WTC11 (cell line): ENCODE measurements at regions of chr12 and their contacts with region 1.

Region 1: DNA sequence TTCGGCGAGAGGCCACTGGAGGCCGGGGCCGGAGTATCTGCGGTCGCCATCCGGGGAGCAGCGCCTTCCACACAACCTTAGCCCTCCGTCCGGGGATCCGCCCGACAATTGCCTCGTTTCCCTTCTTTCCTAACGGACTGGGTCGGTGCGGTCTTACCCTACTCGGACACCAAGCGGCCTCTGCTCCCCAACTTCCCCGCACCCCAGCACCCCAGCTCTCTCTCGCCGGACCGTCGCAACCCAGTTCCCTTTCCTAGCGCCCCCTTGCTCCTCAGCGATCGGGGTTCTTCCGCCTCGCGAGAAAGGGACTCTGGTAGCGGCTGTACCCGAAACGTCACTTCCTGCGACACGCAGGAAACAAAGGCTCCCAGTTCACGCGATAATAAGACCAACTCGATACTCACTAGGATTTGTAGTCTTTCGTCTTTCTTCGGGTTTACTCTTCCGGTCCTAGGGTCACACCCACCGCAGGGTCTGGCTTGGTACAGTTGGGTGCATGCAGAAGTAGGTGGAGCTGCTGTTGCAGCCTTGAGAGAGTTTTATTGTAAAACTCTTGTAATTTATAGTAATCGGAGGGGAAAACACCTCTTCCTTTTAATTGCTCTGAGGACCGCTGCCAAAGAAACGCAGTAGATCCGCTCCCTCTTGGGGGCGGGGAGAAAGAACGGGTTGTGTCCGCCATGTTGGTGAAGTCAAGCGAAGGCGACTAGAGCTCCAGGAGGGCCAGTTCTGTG is at the start of gene ZFC3H1:
- DNase-seq: peak; percentile 91
- ATAC-seq: peak; percentile 94
- H3K4me3 Mint-ChIP-seq: peak within 1 kb of the TSS; percentile 91
- H3K27ac Mint-ChIP-seq: peak within 1 kb of the TSS; percentile 100
- H3K4me1 Mint-ChIP-seq: peaks cover 16% of the 10 kb centered on the region
- H3K27me3 Mint-ChIP-seq: no peaks in the 10 kb centered on the region
- CTCF ChIP-seq: no peak
- total RNA-seq, gene ZFC3H1: 28.3 to 33.9 TPM (median 30.9 TPM) in 3 replicates

Region 2: DNA sequence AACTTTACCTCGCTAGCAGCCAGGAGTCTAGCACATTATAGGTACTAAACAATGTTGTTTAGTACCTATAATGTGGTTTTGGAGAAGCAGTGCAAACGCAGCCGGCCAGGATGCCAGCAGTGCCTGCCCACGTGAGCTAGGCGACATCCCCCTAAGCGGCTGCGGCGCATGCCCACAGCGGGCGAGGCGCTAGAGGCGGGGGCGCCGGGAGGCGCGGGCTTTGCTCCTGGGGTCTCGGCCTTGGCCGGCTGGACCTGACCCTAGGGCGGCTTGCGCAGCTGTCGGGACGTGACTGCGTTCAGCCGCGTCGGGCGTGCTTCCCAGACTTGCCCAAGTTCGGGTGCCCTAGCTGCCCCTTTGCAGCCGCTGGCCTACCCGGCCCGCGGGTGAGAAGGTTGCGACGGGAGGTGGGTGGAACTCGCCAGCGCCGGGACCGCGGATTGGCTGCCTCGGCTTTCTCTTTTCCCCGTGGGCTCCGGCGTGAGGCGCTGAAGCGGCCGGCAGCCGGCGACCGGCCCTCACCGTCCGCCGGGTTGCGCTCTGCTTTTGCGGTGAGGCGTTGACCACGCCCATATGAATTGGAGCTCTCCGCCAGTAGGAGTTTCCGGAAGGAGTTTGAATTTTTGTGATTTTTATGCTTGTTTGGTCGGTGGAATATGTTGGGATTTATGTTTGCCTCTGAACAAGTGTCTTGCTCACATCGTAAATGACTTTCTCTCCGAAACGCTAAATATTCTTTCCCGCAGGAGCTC is 22.4 kb after region 1 on chr12 and contains the start of gene TMEM19:
- CTCF ChIA-PET with region 1: interaction called, 4 read pairs
- POLR2A ChIA-PET with region 1: interaction called, 45 read pairs
- DNase-seq: peak; percentile 86
- ATAC-seq: peak; percentile 95
- H3K4me3 Mint-ChIP-seq: peak within 1 kb of the TSS; percentile 95
- H3K27ac Mint-ChIP-seq: peak within 1 kb of the TSS; percentile 99
- H3K4me1 Mint-ChIP-seq: peaks cover 14% of the 10 kb centered on the region
- H3K27me3 Mint-ChIP-seq: no peaks in the 10 kb centered on the region
- CTCF ChIP-seq: no peak
- total RNA-seq, gene TMEM19: 10.7 to 15.6 TPM (median 11.7 TPM) in 3 replicates

Region 3: GRCh38 chr12:71754461-71755145 is 90.9 kb after region 1 on chr12 and contains the start of gene RAB21:
- CTCF ChIA-PET with region 1: interaction called, 5 read pairs
- POLR2A ChIA-PET with region 1: interaction called, 16 read pairs
- DNase-seq: peak; percentile 99
- ATAC-seq: peak; percentile 99
- H3K4me3 Mint-ChIP-seq: peak within 1 kb of the TSS; percentile 85
- H3K27ac Mint-ChIP-seq: peak within 1 kb of the TSS; percentile 91
- H3K4me1 Mint-ChIP-seq: peaks cover 35% of the 10 kb centered on the region
- H3K27me3 Mint-ChIP-seq: no peaks in the 10 kb centered on the region; the same call in 1 of the 2 replicates
- CTCF ChIP-seq: no peak
- total RNA-seq, gene RAB21: 32.6 to 35.8 TPM (median 33.6 TPM) in 3 replicates

Region 4: DNA sequence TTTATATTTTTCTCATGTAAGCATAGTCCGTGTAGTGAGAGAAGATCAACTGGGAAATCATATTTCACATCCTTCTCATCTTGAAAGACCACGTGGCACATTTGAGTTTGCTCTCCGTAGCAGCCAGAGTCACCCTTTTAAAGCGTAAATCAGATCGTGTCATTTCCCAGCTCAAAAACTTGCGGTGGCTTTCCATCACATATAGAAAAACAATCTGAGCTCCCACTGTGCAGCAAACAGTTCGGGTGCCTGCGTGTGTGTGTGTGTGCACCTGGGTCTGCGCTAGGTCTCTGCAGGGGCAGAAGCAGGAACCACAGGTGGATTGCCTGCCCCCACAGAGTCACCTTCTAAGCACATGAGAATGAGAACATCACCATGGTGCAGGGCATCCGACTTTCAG is 946.6 kb after region 1 on chr12:
- CTCF ChIA-PET with region 1: no interaction called
- POLR2A ChIA-PET with region 1: no interaction called
- DNase-seq: peak; percentile 11
- ATAC-seq: no peak
- H3K4me3 Mint-ChIP-seq: peak overlapping the region; percentile 50
- H3K27ac Mint-ChIP-seq: peak overlapping the region; percentile 98
- H3K4me1 Mint-ChIP-seq: peaks cover 74% of the 10 kb centered on the region
- H3K27me3 Mint-ChIP-seq: no peaks in the 10 kb centered on the region
- CTCF ChIP-seq: no peak